ENCODE measurements at regions of chr19 and their contacts with region 1.

Region 1: GRCh38 chr19:44723952-44724319 is 24.6 kb upstream of the BCL3 start:
- DNase-seq: peak; percentile 79 to 86
- H3K4me3 ChIP-seq: no peak overlapping the region
- H3K27ac ChIP-seq: peak overlapping the region in 1 of 2 donors; percentile 39
- H3K4me1 ChIP-seq: peaks cover 1 to 4% of the 10 kb centered on the region in 2 donors
- H3K27me3 ChIP-seq: no peaks in the 10 kb centered on the region
- CTCF ChIP-seq: peak; percentile 97 to 99 (median 98)
- POLR2A ChIP-seq: no peak

Region 2: GRCh38 chr19:44770550-44771257 is 46.8 kb after region 1 on chr19:
- intact Hi-C with region 1: loop called (anchors 2 kb)
- DNase-seq: peak; percentile 89 to 93
- H3K4me3 ChIP-seq: no peak overlapping the region
- H3K27ac ChIP-seq: peak overlapping the region in 1 of 2 donors; percentile 20
- H3K4me1 ChIP-seq: peaks cover 0 to 6% of the 10 kb centered on the region in 2 donors
- H3K27me3 ChIP-seq: no peaks in the 10 kb centered on the region
- CTCF ChIP-seq: peak; percentile 88 to 94 (median 92)
- POLR2A ChIP-seq: no peak

Region 3: GRCh38 chr19:44845612-44846454 is 121.9 kb after region 1 on chr19 and contains the start of gene NECTIN2:
- intact Hi-C with region 1: loop called (anchors 10 kb)
- DNase-seq: peak; percentile 100
- H3K4me3 ChIP-seq: peak within 1 kb of the TSS; percentile 69 to 100
- H3K27ac ChIP-seq: peak within 1 kb of the TSS; percentile 96 to 97
- H3K4me1 ChIP-seq: peaks cover 3 to 12% of the 10 kb centered on the region in 2 donors
- H3K27me3 ChIP-seq: no peaks in the 10 kb centered on the region
- CTCF ChIP-seq: peak; percentile 51 to 85 (median 80)
- POLR2A ChIP-seq: peak; percentile 91 to 97
- total RNA-seq, gene NECTIN2: 14.1 to 106 (median 86.1) TPM

Region 4: GRCh38 chr19:45202637-45203036 is 478.7 kb after region 1 on chr19:
- intact Hi-C with region 1: no loop called
- DNase-seq: no peak
- H3K4me3 ChIP-seq: no peak overlapping the region
- H3K27ac ChIP-seq: no peak overlapping the region
- H3K4me1 ChIP-seq: no peaks in the 10 kb centered on the region
- H3K27me3 ChIP-seq: no peaks in the 10 kb centered on the region
- CTCF ChIP-seq: no peak
- POLR2A ChIP-seq: no peak

Measured in uterus (tissue), 4 donors.